ENCODE measurements at regions of chr18 and their contacts with region 1.

Region 1: DNA sequence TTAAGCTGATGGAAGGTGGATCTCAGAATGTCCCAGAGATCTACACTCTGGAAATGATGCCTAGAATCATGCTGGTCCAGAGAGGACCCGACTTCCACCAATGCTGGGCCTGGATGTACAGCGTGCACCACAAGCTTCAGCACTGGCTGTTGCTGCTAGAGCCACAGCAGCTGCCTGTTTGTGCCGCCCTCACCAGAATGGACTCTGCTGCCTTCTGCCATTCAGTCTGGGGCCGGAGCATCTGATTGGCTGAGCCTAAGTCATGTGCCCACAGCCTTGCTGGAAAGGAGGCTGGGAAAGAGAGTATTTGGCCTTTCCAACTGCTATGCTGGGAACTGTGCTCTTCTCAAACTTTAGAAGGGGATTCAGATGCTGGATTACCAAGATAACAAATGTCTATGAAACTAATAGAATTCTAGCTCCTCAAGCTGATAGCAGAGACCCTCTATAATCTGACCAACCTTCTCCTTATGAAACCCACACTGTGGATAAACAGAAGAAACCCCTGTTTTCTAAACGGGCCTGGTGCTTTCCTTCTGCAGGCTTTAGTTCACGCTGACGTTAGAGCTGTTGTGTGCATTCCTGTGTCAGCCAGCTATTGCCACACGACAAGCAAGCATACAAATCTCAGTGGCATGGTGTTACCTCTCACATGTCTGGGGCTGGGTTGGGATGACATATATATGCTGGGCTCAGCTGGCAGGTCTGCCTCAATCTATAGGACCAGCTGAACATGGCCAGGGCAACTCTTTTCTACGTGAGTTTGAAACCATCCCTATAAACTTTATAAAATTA is 4.1 kb upstream of the LOXHD1 start:
- DNase-seq: no peak
- H3K4me3 Mint-ChIP-seq: no peak overlapping the region
- H3K27ac Mint-ChIP-seq: no peak overlapping the region
- H3K4me1 Mint-ChIP-seq: no peaks in the 10 kb centered on the region
- H3K27me3 Mint-ChIP-seq: no peaks in the 10 kb centered on the region

Region 2: DNA sequence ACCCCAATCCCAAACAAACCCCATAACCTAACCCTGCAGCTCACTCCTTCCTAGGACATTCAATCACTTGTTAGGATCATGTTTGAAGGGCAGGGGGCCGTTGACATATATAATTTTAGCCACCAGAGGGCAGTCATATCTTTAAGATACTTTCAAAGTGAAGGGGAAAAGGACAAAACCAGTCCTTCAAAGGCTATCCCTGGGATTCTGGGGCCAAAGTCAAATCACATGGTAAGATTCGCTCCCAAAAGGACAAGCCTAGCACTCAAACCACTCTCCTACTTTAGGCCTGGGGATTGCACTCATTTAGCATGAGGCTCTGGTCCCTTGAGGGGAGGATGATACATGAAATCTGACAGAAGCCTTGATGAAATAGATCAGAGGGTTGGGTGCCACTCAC is 512.3 kb before region 1 on chr18:
- CTCF ChIA-PET with region 1: interaction called, 135 read pairs
- POLR2A ChIA-PET with region 1: no interaction called
- intact Hi-C with region 1: loop called (anchors 1 kb)
- DNase-seq: peak; percentile 54
- H3K4me3 Mint-ChIP-seq: no peak overlapping the region
- H3K27ac Mint-ChIP-seq: no peak overlapping the region
- H3K4me1 Mint-ChIP-seq: peaks cover 32% of the 10 kb centered on the region
- H3K27me3 Mint-ChIP-seq: no peaks in the 10 kb centered on the region

Region 3: GRCh38 chr18:46555724-46556123 is 105.4 kb before region 1 on chr18:
- CTCF ChIA-PET with region 1: interaction called, 8 read pairs
- POLR2A ChIA-PET with region 1: no interaction called
- intact Hi-C with region 1: loop called (anchors 5 kb)
- DNase-seq: peak; percentile 11
- H3K4me3 Mint-ChIP-seq: no peak overlapping the region
- H3K27ac Mint-ChIP-seq: no peak overlapping the region
- H3K4me1 Mint-ChIP-seq: no peaks in the 10 kb centered on the region
- H3K27me3 Mint-ChIP-seq: no peaks in the 10 kb centered on the region

Region 4: DNA sequence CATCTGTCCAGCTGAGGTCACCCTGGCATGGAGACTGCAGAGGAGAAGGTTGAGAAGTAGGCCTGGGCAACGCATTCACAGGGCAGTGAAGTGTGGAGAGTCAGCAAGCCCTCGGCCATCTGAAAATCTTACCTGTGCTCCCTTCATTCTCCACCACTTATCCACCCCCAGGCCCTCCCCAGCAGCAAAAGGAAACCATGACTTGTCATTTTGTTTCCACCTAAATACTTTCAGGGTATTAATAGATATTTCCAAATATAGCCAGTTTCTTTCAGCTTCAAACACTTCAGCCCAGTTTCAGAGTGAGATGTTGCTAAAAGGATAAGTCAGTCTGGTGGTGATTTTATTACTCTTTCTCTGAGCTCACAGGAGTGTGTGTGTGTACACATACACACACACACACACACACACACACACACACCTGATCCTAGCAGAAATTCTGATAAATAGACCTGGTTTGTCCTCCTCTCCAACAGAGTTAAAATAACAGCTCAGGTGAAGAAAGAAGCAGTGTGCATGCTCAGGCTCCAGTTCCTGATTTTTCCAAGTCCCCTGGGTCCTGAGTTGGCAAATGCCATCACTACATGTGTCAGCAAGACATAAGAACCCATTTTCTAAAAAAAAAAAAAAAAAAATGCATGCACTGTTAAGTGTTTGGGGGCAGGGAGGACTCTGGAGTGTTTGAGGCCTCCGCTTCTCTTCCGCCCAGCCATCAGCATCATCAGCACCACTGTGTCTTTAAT is 87.0 kb before region 1 on chr18:
- CTCF ChIA-PET with region 1: no interaction called
- POLR2A ChIA-PET with region 1: no interaction called
- intact Hi-C with region 1: no loop called
- DNase-seq: no peak
- H3K4me3 Mint-ChIP-seq: no peak overlapping the region
- H3K27ac Mint-ChIP-seq: no peak overlapping the region
- H3K4me1 Mint-ChIP-seq: no peaks in the 10 kb centered on the region
- H3K27me3 Mint-ChIP-seq: peaks cover 8% of the 10 kb centered on the region

Region 5: GRCh38 chr18:46596119-46596518 is 65.0 kb before region 1 on chr18:
- CTCF ChIA-PET with region 1: no interaction called
- POLR2A ChIA-PET with region 1: no interaction called
- intact Hi-C with region 1: no loop called
- DNase-seq: no peak
- H3K4me3 Mint-ChIP-seq: no peak overlapping the region
- H3K27ac Mint-ChIP-seq: no peak overlapping the region
- H3K4me1 Mint-ChIP-seq: no peaks in the 10 kb centered on the region
- H3K27me3 Mint-ChIP-seq: peaks cover 17% of the 10 kb centered on the region

Region 6: DNA sequence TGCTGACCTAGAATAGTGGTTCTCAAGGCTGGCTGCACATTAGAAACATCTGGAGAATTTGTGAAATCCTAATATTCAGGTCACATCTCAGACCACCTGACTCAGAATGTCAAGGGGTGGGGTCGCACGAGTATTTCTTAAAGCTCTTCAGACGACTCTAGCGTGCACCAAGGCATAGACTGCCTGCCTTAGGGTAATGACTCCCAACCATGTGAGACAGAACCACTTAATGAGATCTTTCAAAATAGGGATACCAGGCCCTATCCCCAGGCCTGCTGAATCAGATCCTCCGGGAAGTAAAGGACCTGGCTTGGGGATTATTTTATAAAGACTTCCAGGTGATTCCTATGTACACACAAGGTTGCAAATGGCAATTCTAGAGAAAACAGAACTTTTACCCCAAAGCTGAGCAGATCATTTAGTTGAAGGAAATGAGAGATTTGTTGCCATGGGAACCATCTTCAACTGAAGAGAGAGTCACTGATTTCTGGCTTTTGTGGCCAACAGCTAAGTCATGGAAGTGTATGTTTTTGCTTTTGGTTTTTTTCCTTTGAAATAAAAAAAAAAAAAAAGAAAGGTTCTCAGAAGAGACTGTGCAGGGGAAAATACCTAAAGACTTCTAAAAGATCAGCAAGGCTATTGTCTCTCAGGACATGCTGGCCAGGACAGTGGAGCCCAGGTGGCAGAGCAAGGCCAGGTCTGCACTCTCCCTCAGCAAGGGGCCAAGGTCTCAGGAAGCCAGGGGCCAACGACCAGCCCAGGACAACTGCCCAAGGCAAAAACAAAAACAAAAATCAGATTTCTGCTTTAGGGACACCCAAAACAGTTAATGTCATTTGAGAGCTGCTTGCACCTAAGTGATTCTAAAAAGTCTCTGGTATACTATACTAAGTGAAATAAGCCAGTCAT is 11.2 kb after region 1 on chr18:
- CTCF ChIA-PET with region 1: interaction called, 12 read pairs
- POLR2A ChIA-PET with region 1: no interaction called
- intact Hi-C with region 1: no loop called
- DNase-seq: no peak
- H3K4me3 Mint-ChIP-seq: no peak overlapping the region
- H3K27ac Mint-ChIP-seq: no peak overlapping the region
- H3K4me1 Mint-ChIP-seq: peaks cover 16% of the 10 kb centered on the region
- H3K27me3 Mint-ChIP-seq: peaks cover 2% of the 10 kb centered on the region